ENCODE measurements at regions of chr20 and their contacts with region 1.

Region 1: DNA sequence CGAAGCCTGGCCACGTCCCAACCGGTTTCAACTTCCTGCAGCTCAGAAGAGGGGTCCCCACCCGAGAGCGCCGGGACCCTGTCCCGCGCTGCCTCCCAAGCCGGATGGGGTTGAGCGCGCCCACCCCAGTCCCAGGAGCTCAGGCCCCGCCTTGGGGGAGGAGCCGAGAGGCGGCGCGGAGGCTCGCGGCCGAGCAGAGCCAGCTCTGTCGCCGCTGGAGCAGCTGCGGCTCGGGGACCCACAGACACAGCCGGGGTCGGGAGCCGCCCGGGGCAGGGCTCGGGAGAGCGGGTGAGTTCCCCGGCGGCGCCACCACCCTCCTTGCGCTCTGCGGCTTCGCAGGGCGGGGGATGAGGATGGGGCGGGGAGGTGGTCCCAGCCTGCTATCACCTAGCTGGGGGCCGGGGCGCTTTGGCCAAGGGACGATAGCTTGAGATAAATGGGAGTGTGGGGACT is at the start of gene PPP1R16B:
- DNase-seq: peak; percentile 85
- ATAC-seq: peak; percentile 75
- H3K4me3 ChIP-seq: peak within 1 kb of the TSS; percentile 17 to 99 (median 95)
- H3K4me3 Mint-ChIP-seq: peak within 1 kb of the TSS; percentile 95
- H3K27ac ChIP-seq: peak within 1 kb of the TSS; percentile 99
- H3K27ac Mint-ChIP-seq: peak within 1 kb of the TSS; percentile 96
- H3K4me1 ChIP-seq: peaks cover 49 to 55% of the 10 kb centered on the region in 2 donors
- H3K4me1 Mint-ChIP-seq: peaks cover 53% of the 10 kb centered on the region
- H3K27me3 ChIP-seq: no peaks in the 10 kb centered on the region
- H3K27me3 Mint-ChIP-seq: no peaks in the 10 kb centered on the region
- CTCF ChIP-seq: no peak
- total RNA-seq, gene PPP1R16B: 108 and 112 TPM in 2 replicates

Region 2: GRCh38 chr20:37816003-37816402 is 989.5 kb before region 1 on chr20:
- CTCF ChIA-PET with region 1: no interaction called
- POLR2A ChIA-PET with region 1: no interaction called
- intact Hi-C with region 1: no loop called
- DNase-seq: no peak
- ATAC-seq: no peak
- H3K4me3 ChIP-seq: no peak overlapping the region
- H3K4me3 Mint-ChIP-seq: no peak overlapping the region
- H3K27ac ChIP-seq: no peak overlapping the region
- H3K27ac Mint-ChIP-seq: no peak overlapping the region
- H3K4me1 ChIP-seq: peaks cover 4 to 5% of the 10 kb centered on the region in 2 donors
- H3K4me1 Mint-ChIP-seq: peaks cover 30% of the 10 kb centered on the region
- H3K27me3 ChIP-seq: no peaks in the 10 kb centered on the region
- H3K27me3 Mint-ChIP-seq: no peaks in the 10 kb centered on the region
- CTCF ChIP-seq: no peak

Region 3: DNA sequence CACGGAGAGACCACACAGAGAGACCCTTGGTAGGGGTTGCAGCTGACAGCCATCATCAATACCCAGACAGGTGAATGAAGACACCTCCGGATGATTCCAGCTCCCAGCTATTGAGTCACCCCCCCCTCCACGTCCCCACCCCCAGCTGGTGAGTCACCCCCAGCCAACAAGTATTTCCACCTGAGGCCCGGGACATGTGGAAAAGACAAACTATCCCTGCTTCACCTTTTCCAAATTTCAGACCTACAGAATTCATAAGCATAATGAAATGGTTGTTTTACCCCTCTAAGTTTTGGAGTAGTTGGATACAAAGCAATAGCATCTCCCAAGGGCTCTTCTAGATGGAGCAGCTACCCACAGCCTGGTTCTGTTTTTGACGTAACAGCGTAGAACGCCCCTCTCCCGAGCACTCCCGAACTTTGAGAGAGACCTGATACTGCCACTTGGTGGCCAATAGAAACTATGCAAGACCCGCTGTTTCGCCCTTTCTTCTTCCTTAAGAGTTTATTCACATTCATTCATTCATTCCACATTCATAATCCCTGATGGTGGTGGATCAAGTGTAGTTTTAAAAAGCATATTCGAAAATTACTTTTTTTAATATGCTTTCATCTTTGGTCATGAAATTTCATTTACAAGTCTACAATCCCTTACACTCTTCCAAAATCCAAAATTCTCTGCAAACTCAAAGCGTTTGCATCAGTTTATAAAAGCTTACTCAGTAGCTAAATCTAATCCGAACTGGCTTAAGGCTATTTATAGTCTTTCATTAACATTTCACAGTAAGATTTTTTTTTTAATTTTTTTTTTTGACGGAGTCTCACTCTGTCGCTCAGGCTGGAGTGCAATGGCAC is 15.1 kb before region 1 on chr20:
- CTCF ChIA-PET with region 1: interaction called, 8 read pairs
- POLR2A ChIA-PET with region 1: no interaction called
- intact Hi-C with region 1: loop called (anchors 2 kb)
- DNase-seq: peak; percentile 70
- ATAC-seq: peak; percentile 65
- H3K4me3 ChIP-seq: no peak overlapping the region
- H3K4me3 Mint-ChIP-seq: peak overlapping the region; percentile 50
- H3K27ac ChIP-seq: no peak overlapping the region
- H3K27ac Mint-ChIP-seq: peak overlapping the region; percentile 29
- H3K4me1 ChIP-seq: peaks cover 3 to 4% of the 10 kb centered on the region in 2 donors
- H3K4me1 Mint-ChIP-seq: peaks cover 3% of the 10 kb centered on the region
- H3K27me3 ChIP-seq: no peaks in the 10 kb centered on the region
- H3K27me3 Mint-ChIP-seq: no peaks in the 10 kb centered on the region
- CTCF ChIP-seq: peak; percentile 75

Region 4: GRCh38 chr20:38827770-38828281 is 22.3 kb after region 1 on chr20:
- CTCF ChIA-PET with region 1: no interaction called
- POLR2A ChIA-PET with region 1: no interaction called
- intact Hi-C with region 1: no loop called
- DNase-seq: no peak
- ATAC-seq: no peak
- H3K4me3 ChIP-seq: no peak overlapping the region
- H3K4me3 Mint-ChIP-seq: no peak overlapping the region
- H3K27ac ChIP-seq: peak overlapping the region in 1 of 2 donors; percentile 67
- H3K27ac Mint-ChIP-seq: peak overlapping the region; percentile 86
- H3K4me1 ChIP-seq: peaks cover 36 to 47% of the 10 kb centered on the region in 2 donors
- H3K4me1 Mint-ChIP-seq: peaks cover 89% of the 10 kb centered on the region
- H3K27me3 ChIP-seq: no peaks in the 10 kb centered on the region
- H3K27me3 Mint-ChIP-seq: no peaks in the 10 kb centered on the region
- CTCF ChIP-seq: no peak

Region 5: GRCh38 chr20:38875175-38875993 is 69.9 kb after region 1 on chr20:
- CTCF ChIA-PET with region 1: interaction called, 66 read pairs
- POLR2A ChIA-PET with region 1: interaction called, 64 read pairs
- intact Hi-C with region 1: loop called (anchors 1 kb)
- DNase-seq: peak; percentile 93
- ATAC-seq: peak; percentile 73
- H3K4me3 ChIP-seq: peak overlapping the region in 4 of 5 experiments; percentile 14 to 47 (median 35)
- H3K4me3 Mint-ChIP-seq: peak overlapping the region; percentile 86
- H3K27ac ChIP-seq: peak overlapping the region; percentile 93 to 99
- H3K27ac Mint-ChIP-seq: peak overlapping the region; percentile 100
- H3K4me1 ChIP-seq: peaks cover 97 to 99% of the 10 kb centered on the region in 2 donors
- H3K4me1 Mint-ChIP-seq: peaks cover 94% of the 10 kb centered on the region
- H3K27me3 ChIP-seq: no peaks in the 10 kb centered on the region
- H3K27me3 Mint-ChIP-seq: no peaks in the 10 kb centered on the region
- CTCF ChIP-seq: no peak

Region 6: DNA sequence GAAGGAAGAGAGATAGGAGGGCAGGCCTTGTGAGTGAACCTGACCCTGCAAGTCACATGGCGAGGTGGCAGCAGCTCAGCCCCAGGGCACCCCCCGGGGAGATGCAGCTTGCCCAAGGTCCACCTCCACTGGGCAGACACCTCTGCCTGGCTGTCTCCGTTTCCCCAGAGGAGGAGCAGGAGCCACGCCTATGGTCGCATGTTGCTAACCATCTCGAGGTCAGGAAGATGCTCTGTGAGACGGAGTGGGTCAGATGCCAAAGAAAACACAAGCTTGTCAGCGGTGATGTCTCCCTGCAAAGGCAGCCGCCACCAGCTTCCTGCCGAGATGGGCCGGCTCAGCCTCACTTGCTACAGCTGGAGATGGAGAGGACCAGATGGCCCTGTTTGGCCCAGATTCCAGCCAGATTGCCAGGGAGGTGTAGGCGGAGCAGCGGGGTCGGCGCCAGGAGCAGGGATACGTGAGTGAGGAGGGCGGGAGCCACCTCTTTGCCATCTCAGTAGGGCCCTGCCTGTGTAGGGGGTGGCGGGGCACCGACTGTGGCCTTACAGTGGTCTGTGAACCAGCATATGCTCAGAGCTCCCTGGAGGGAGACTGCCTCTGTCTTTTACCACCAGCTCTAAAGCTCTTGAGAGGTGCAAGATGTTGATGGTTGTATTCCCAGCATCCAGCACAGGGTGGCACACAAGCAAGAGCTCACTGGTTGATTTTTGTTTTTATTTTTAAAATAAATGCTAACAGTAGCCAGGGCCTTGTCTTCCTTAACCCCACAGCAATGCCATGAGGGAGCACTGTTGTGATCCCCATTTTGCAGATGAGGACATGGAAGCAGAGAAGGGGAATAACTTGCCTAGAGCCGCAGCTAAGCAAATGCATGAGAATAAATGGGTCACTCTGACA is 77.8 kb after region 1 on chr20:
- CTCF ChIA-PET with region 1: interaction called, 51 read pairs
- POLR2A ChIA-PET with region 1: interaction called, 14 read pairs
- intact Hi-C with region 1: no loop called
- DNase-seq: no peak
- ATAC-seq: no peak
- H3K4me3 ChIP-seq: no peak overlapping the region
- H3K4me3 Mint-ChIP-seq: peak overlapping the region; percentile 82
- H3K27ac ChIP-seq: peak overlapping the region; percentile 66 to 99
- H3K27ac Mint-ChIP-seq: peak overlapping the region; percentile 94
- H3K4me1 ChIP-seq: peaks cover 90 to 99% of the 10 kb centered on the region in 2 donors
- H3K4me1 Mint-ChIP-seq: peaks cover 92% of the 10 kb centered on the region
- H3K27me3 ChIP-seq: no peaks in the 10 kb centered on the region
- H3K27me3 Mint-ChIP-seq: no peaks in the 10 kb centered on the region
- CTCF ChIP-seq: no peak

Region 7: GRCh38 chr20:38926142-38926933 is 120.8 kb after region 1 on chr20 and contains the start of gene FAM83D:
- CTCF ChIA-PET with region 1: interaction called, 3 read pairs
- POLR2A ChIA-PET with region 1: no interaction called
- intact Hi-C with region 1: loop called (anchors 1 kb)
- DNase-seq: peak; percentile 95
- ATAC-seq: peak; percentile 96
- H3K4me3 ChIP-seq: peak within 1 kb of the TSS; percentile 31 to 73 (median 59)
- H3K4me3 Mint-ChIP-seq: peak within 1 kb of the TSS; percentile 82
- H3K27ac ChIP-seq: peak within 1 kb of the TSS in 1 of 2 donors; percentile 49
- H3K27ac Mint-ChIP-seq: peak within 1 kb of the TSS; percentile 75
- H3K4me1 ChIP-seq: peaks cover 6 to 18% of the 10 kb centered on the region in 2 donors
- H3K4me1 Mint-ChIP-seq: peaks cover 27% of the 10 kb centered on the region
- H3K27me3 ChIP-seq: peaks cover 0 to 3% (median 1%) of the 10 kb centered on the region in 4 experiments
- H3K27me3 Mint-ChIP-seq: no peaks in the 10 kb centered on the region
- CTCF ChIP-seq: peak; percentile 34
- total RNA-seq, gene FAM83D: 1.7 and 2.0 TPM in 2 replicates